OCI-LY7 (cell line): ENCODE measurements at regions of chrX and their contacts with region 1.

Region 1: DNA sequence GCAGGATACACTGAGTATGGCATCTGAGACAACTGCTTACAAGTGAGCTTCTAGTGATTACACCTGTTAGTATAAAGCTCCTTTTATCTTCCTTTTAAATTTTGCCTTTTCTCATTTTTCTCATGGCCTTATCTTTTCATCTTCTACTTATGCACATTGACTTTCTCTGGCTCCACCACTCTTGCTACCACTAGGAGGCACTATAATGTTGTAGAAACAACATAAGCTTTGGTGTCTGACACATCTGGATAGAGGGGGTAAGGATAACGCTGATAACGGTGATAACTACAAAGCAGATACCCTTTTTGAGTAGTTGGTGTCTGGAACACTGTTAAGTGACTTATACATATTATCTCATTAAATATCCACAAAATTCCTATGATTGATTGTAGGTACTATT is 187.4 kb upstream of the TEX13C start:
- DNase-seq: peak; percentile 28
- H3K4me3 ChIP-seq: no peak overlapping the region
- H3K27ac ChIP-seq: no peak overlapping the region
- H3K4me1 ChIP-seq: no peaks in the 10 kb centered on the region
- CTCF ChIP-seq: peak; percentile 76

Region 2: GRCh38 chrX:124388562-124388961 is 743.7 kb before region 1 on chrX:
- CTCF ChIA-PET with region 1: no interaction called
- POLR2A ChIA-PET with region 1: no interaction called
- intact Hi-C with region 1: loop called (anchors 5 kb)
- DNase-seq: peak; percentile 79
- H3K4me3 ChIP-seq: no peak overlapping the region
- H3K27ac ChIP-seq: peak overlapping the region; percentile 59
- H3K4me1 ChIP-seq: peaks cover 64% of the 10 kb centered on the region
- CTCF ChIP-seq: peak; percentile 78